ENCODE measurements at regions of chr4 and their contacts with region 1.

Region 1: DNA sequence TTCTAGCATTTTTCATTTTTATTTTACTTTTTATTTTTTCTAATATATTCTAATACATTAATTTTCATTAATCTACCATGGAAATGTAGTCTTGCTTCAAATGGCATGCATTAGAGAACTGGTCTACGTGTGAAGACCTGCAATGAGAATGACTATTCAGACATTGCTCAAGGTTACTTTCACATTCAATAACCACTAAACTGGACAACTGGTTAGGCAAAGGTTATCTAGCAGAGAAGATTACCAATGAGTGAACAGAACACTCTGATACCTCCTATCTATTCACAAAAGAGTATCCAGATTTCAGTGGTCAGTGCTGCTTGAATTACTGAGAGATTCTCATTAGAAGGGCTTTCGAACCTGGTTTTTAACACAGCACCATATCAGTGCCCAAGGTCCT is 58.9 kb upstream of the ARHGAP24 start:
- DNase-seq: no peak
- ATAC-seq: no peak
- H3K4me3 Mint-ChIP-seq: no peak overlapping the region
- H3K27ac Mint-ChIP-seq: no peak overlapping the region
- H3K4me1 Mint-ChIP-seq: peaks cover 5% of the 10 kb centered on the region
- H3K27me3 Mint-ChIP-seq: no peaks in the 10 kb centered on the region
- CTCF ChIP-seq: no peak

Region 2: DNA sequence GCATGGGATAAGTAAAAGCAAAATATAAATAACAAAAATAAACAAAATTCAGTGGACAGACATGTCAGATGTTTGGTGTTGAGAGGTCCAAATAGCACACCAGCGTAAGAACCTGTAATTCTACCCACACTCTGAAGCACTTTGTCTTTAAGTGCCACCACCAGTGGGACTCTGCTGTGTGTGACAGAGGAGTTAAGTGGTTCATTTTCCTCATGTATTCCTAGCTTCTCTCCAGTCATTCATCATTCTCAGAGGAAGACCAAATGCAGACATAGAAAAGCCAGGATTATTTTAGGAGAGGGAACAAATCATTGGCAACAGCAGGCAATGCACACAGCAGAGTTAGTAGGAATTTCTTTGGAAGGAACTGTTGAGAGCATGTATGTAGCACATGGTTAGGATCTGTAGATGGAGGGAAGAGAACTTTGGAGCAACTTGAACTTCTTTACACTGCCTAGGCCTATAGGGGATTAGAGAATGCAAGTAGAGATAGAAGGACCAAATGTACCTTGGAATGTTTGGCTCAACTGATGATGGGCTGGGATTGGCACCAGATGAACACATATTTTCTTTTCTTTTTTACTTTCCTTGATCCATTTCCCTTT is 15.9 kb after region 1 on chr4:
- CTCF ChIA-PET with region 1: no interaction called
- POLR2A ChIA-PET with region 1: no interaction called
- intact Hi-C with region 1: loop called (anchors 2 kb)
- DNase-seq: no peak
- ATAC-seq: no peak
- H3K4me3 Mint-ChIP-seq: no peak overlapping the region
- H3K27ac Mint-ChIP-seq: no peak overlapping the region
- H3K4me1 Mint-ChIP-seq: no peaks in the 10 kb centered on the region
- H3K27me3 Mint-ChIP-seq: peaks cover 4% of the 10 kb centered on the region
- CTCF ChIP-seq: no peak

Measured in activated B cell treated with CpG ODN at 0.5 μM for 24 hours (primary cell).